Activated T-helper 1 cell treated with anti-CD3 and anti-CD28 coated beads, Interleukin-12 subunit alpha, Interleukin-12 subunit beta, Interleukin-2, Interleukin-4 antibody, amounts not matched to agents 30 ng/mL and 10 ng/mL and 1 ng/mL, durations not matched to agents 14 hours and 24 hours and 36 hours (primary cell): ENCODE measurements at regions of chr12 and their contacts with region 1.

Region 1: GRCh38 chr12:98516184-98516873 is 939 bp downstream of the TMPO start:
- DNase-seq: peak; percentile 83
- H3K4me3 Mint-ChIP-seq: peak overlapping the region; percentile 98
- H3K27ac Mint-ChIP-seq: peak overlapping the region; percentile 100
- H3K4me1 Mint-ChIP-seq: peaks cover 30% of the 10 kb centered on the region
- H3K27me3 Mint-ChIP-seq: no peaks in the 10 kb centered on the region

Region 2: GRCh38 chr12:98424726-98425401 is 91.5 kb before region 1 on chr12:
- intact Hi-C with region 1: loop called (anchors 1 kb)
- DNase-seq: peak; percentile 18
- H3K4me3 Mint-ChIP-seq: no peak overlapping the region
- H3K27ac Mint-ChIP-seq: no peak overlapping the region
- H3K4me1 Mint-ChIP-seq: peaks cover 6% of the 10 kb centered on the region
- H3K27me3 Mint-ChIP-seq: peaks cover 7% of the 10 kb centered on the region

Region 3: DNA sequence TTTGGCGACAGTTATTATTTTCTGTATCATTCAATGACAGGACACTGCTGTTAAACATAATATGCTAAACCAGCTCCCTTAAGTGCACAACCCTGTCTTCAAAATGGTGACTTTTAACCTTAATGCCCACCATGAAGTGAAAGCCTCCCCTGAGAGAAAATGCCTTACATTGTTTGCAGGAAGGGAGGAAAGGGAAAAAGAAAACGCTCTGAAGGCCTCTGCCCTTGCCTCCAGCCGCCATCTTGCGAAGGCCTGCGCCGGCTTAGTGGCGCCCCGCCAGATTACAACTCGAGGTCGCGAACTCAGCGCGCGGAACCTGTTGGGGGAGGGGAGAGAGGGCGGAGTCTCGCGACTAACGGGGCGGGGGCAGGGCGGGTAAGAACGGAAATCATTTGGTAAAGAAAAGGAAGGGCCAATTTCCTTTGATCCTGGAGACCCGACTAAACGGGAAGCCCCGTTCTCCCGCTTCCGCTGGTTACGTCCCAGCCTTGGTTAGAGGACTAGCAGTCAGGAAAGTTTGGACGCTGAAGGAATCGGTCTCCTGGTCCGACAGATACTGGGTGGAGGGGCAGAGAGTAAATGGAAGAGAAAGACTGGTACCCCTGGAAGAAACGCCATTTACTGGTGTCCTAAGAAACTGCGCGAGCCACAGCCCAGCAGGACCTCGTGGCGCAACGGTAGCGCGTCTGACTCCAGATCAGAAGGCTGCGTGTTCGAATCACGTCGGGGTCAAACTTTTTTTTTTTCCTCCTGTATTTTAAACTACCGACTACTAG is 12.5 kb before region 1 on chr12:
- intact Hi-C with region 1: loop called (anchors 1 kb)
- DNase-seq: peak; percentile 90
- H3K4me3 Mint-ChIP-seq: peak overlapping the region; percentile 91
- H3K27ac Mint-ChIP-seq: peak overlapping the region; percentile 99
- H3K4me1 Mint-ChIP-seq: peaks cover 27% of the 10 kb centered on the region
- H3K27me3 Mint-ChIP-seq: peaks cover 8% of the 10 kb centered on the region

Region 4: GRCh38 chr12:98593351-98594049 is 77.2 kb after region 1 on chr12 and contains the start of gene SLC25A3:
- intact Hi-C with region 1: loop called (anchors 1 kb)
- DNase-seq: peak; percentile 92
- H3K4me3 Mint-ChIP-seq: peak within 1 kb of the TSS; percentile 96
- H3K27ac Mint-ChIP-seq: peak within 1 kb of the TSS; percentile 99
- H3K4me1 Mint-ChIP-seq: peaks cover 29% of the 10 kb centered on the region
- H3K27me3 Mint-ChIP-seq: no peaks in the 10 kb centered on the region
- total RNA-seq, gene SLC25A3: 570 and 580 TPM in 2 replicates

Region 5: GRCh38 chr12:98743347-98743953 is 227.1 kb after region 1 on chr12:
- intact Hi-C with region 1: loop called (anchors 1 kb)
- DNase-seq: peak; percentile 11
- H3K4me3 Mint-ChIP-seq: peak overlapping the region; percentile 69
- H3K27ac Mint-ChIP-seq: peak overlapping the region; percentile 76
- H3K4me1 Mint-ChIP-seq: peaks cover 60% of the 10 kb centered on the region
- H3K27me3 Mint-ChIP-seq: peaks cover 5% of the 10 kb centered on the region